Right ventricle myocardium superior (tissue), 1 donor: ENCODE measurements at regions of chr10 and their contacts with region 1.

Region 1: DNA sequence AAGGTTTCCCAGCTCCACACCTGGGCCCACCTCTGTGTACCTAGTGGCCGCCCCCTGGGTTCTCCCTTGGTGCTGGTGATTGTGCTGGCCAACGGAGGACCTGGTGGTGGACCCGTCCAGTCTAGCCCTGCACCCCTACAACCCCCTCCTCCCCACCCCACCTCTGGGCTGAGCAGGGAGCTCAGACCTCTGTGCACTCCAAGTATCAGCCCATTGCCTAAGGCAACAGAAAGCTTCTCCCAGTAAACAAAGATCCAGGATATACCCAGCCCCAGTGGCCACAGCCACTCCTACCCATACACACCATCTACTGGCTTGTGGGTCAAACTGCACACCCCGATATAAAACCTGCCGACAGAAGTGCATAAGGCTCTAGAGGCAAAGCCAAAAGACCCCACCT is 105.0 kb upstream of the DIP2C start:
- DNase-seq: no peak
- ATAC-seq: peak; percentile 70

Region 2: DNA sequence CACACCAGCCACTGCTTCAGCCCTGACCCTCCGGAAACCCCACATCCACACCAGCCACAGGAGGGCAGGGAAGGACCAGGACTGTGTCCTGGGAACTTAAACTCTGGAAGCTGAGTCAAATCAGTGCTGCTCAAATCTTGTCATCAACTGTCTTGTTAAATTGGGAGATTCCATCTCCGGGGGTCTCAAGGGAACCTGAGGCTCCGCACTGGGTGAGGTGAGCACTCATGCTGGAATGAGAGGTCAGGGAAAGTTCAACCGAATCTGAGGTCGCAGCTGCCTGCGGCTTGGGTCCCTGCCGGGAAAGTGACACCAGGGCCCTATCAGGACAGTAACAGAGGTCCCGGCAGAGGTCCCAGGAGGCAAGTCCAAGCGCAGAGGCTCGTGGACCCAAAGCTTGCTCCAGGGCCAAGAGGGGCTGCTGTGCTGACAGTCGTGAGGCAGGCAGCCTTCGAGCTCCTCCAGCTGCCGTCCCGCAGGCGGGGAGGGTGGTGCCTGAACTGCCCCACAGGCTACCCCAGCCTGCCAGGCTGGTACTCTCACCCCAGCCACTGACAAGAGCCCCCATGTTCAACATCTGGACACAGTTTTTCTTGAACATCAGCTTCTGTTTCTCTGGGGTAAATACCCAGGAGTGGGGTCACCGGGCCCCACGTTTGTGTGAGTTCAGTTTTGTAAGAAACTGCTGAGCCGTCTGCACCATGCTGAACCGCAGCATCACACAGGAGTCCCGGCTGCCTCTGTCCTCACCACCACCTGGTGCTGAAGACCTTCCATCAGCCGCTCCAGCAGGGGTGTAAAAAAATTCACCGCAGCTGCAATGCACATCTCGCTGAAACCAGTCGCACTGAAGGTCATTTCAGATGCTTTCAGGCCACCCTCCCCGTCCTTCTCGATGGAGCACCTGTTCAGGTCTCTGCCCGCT is 206.0 kb before region 1 on chr10:
- intact Hi-C with region 1: loop called (anchors 10 kb)
- DNase-seq: peak; percentile 75
- ATAC-seq: peak; percentile 74

Region 3: DNA sequence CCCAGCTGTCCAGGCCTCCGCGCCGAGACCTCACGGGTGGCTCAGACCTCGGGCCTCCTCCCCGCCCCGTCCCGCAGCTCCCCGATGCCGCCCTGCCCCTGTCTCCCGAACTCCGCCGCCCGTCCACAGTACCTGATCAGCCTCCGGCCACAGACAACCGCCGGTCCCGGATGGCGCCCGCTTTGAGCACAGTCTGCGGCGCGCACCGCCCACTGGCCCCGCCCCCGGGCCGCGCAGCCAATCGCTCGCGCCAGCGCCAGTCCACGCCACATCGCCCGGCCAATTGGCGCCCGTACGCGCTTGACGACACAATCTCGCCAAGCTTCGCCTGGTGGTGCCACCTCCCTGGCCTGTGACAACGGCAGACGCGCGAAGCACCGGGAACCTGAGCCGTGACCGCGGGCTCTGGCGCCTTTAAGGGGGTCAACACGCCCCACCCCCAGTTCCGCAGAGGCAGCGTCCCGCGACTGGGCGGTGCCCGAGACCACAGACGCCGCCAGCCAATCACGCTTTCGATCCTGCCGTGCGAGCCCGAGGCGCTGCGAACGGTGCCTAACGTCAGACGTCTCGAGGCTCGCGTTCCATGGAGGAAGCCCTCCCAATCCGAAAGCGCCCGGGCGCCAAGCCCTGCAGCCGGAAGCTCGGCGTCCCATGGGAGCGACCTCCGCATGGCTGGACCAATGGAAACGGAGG is 254.4 kb after region 1 on chr10 and contains the start of gene IDI1:
- intact Hi-C with region 1: no loop called
- DNase-seq: peak; percentile 98
- ATAC-seq: peak; percentile 97
- total RNA-seq, gene IDI1: 13.0 TPM

Region 4: DNA sequence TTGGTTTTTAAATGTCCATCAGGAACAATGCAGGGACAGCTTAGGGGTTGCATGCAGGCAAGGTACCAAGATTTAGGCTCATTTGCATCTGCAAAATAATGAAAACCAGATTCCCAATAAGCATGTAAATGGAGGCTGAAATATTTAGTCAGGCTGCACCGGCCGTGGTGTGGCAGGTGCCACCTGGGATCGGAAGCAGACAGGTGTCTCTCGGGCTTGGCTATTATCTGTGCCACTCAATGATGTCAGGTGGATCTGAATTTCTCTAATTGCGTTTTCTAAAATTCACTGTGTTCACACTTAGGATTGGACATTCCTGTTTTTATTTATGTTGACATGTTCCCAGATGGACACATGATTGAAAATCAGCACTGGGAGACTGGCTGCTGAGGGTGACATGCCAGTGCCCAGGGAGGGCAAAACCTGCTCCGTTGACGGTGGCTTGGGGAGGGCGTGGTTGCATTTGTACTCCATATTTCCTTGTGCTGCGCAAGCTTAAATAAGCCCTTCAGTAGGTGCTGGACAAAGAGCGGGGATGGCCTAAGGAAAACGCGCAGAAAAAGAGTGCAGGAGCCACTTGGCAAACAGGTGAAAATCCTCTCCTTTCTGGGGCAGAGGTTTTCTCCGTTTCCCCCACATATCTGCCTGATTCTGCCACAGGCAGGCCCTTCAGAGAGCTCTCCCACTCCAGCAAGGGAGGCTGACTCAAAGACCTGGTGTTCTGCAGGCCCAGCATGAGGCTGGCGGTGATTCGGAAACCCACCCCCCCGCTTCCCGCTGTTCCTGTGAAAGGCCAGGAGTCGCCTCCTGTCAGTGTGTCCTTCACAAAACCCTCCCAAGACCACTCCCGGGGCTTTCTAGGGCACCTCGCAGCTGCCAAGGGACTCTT is 404.2 kb after region 1 on chr10:
- intact Hi-C with region 1: no loop called
- DNase-seq: no peak
- ATAC-seq: no peak